A673 (cell line): ENCODE measurements at regions of chr17 and their contacts with region 1.

Region 1: DNA sequence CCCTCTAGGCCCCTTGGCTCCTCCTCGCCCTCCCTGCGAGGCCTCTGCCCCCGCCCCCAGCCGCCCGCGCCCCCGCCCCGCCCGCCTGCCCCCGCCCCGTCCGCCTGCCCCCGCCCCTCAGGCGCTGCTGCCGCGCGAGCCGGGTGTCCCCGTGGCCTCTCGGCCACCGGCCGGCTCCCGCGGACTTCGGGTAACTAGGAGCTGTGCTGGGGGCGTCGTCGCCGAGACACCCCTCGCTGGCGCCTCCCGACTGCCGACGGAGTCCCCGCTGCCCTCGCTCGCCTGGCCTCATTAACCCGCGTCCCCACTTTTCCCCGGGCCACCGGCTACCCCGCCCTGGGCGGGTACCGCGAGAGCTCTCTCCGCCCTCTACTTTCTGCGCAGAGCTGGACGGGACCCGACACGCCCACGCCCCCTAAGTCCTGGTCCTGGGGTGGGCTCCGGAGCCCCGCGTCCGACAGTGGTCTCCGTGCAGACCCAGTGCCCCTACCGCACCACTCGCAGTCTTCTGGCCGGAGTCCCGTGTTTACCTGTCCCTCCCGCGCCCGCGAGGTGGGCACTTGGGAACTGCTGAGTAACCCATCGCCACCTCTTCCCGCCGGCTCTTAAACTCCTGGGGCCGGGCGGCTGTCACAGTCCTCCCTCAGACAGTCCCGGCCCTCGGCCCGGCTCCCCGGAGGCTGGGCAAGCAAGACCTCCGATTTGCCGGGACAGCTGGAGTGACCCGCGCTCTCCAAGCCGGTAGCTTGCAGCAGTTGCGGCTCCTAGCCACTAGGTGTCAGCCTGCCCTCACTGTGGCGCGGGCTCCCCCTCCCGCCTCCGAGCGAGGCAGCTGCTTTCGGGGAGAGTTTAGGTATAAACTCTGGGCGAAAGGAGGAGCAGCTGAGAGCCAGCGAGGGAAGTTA is at the start of gene TLCD1:
- DNase-seq: peak; percentile 97
- H3K4me3 ChIP-seq: peak within 1 kb of the TSS; percentile 59
- H3K27ac ChIP-seq: peak within 1 kb of the TSS; percentile 79
- H3K4me1 ChIP-seq: peaks cover 46% of the 10 kb centered on the region
- H3K27me3 ChIP-seq: no peaks in the 10 kb centered on the region
- CTCF ChIP-seq: peak; percentile 99
- total RNA-seq, gene TLCD1: 3.8 and 7.8 TPM in 2 replicates

Region 2: DNA sequence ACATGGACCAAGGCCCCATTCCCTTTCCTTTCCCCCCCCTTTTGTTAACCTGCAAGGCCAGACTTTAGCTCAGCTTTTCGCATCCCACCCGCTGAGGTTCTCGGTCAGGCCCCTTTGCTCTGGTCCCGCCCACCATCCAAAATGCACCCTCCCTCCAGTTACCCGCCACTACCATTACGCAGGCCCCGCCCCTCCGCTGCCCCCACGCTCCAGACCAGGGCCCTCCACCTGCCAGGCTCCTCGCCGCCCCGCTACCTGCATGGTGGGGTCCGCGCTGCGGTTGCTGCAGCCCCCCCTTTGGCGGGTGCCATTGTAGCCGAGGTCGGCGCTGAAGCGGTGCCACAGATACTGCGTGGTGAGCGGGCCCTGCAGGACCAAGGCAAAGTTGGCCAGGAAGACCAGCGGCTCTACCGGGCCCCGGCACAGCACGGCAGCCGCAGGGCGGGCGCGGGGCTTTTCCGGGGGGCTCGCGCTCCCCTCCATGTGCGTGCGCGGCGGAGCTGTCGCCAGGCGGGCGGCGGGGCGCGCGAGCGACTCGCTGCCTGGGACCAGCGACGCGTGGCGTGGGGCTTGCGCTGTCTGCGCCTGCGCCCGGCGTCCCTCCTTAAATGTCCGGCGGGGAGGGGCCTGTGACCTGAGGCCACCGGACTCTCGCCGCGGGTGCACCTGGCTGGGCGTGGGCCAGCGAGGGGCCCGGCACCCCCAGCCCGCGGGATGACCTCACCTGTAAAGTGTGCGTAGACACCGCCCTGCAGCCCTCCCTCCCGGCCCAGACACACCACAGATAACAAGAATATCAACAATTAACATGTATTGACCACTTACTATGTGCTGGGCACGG is 320.6 kb before region 1 on chr17 and contains the start of gene SLC46A1:
- CTCF ChIA-PET with region 1: no interaction called
- POLR2A ChIA-PET with region 1: no interaction called
- intact Hi-C with region 1: no loop called
- DNase-seq: peak; percentile 62
- H3K4me3 ChIP-seq: peak within 1 kb of the TSS; percentile 64
- H3K27ac ChIP-seq: peak within 1 kb of the TSS; percentile 66
- H3K4me1 ChIP-seq: peaks cover 7% of the 10 kb centered on the region
- H3K27me3 ChIP-seq: no peaks in the 10 kb centered on the region
- CTCF ChIP-seq: no peak
- total RNA-seq, gene SLC46A1: 4.4 and 6.4 TPM in 2 replicates

Region 3: GRCh38 chr17:28743225-28744103 is 17.0 kb after region 1 on chr17 and contains the start of gene TRAF4:
- CTCF ChIA-PET with region 1: interaction called, 17 read pairs
- POLR2A ChIA-PET with region 1: interaction called, 4 read pairs
- intact Hi-C with region 1: loop called (anchors 2 kb)
- DNase-seq: peak; percentile 93
- H3K4me3 ChIP-seq: peak within 1 kb of the TSS; percentile 72
- H3K27ac ChIP-seq: peak within 1 kb of the TSS; percentile 94
- H3K4me1 ChIP-seq: peaks cover 32% of the 10 kb centered on the region
- H3K27me3 ChIP-seq: no peaks in the 10 kb centered on the region
- CTCF ChIP-seq: no peak
- total RNA-seq, gene TRAF4: 128 TPM in 2 replicates

Region 4: DNA sequence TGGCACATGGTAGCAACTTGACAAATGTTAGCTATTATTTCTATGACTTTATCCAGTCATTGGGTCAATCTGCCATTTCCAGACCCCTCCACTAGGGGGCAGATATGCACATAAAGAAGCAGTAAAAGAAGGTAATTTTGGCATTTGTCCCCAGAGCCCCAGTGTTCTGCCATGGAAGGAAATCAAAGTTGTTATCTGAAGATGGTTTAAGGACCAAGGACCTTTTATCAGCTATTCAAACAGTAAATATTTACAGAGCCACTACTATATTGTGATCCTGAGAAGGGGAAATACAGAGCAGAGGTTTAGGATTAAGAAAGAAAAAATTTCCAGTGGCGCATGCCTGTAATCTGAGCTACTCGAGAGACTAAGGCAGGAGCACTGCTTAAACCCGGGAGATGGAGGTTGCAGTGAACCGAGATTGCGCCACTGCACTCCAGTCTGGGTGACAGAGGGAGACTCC is 37.4 kb after region 1 on chr17:
- CTCF ChIA-PET with region 1: interaction called, 13 read pairs
- POLR2A ChIA-PET with region 1: interaction called, 3 read pairs
- intact Hi-C with region 1: loop called (anchors 1 kb)
- DNase-seq: peak; percentile 89
- H3K4me3 ChIP-seq: no peak overlapping the region
- H3K27ac ChIP-seq: no peak overlapping the region
- H3K4me1 ChIP-seq: peaks cover 29% of the 10 kb centered on the region
- H3K27me3 ChIP-seq: no peaks in the 10 kb centered on the region
- CTCF ChIP-seq: peak; percentile 96

Region 5: GRCh38 chr17:28916302-28916934 is 189.9 kb after region 1 on chr17:
- CTCF ChIA-PET with region 1: interaction called, 13 read pairs
- POLR2A ChIA-PET with region 1: interaction called, 8 read pairs
- intact Hi-C with region 1: loop called (anchors 2 kb)
- DNase-seq: peak; percentile 60
- H3K4me3 ChIP-seq: no peak overlapping the region
- H3K27ac ChIP-seq: no peak overlapping the region
- H3K4me1 ChIP-seq: no peaks in the 10 kb centered on the region
- H3K27me3 ChIP-seq: no peaks in the 10 kb centered on the region
- CTCF ChIP-seq: peak; percentile 73

Region 6: DNA sequence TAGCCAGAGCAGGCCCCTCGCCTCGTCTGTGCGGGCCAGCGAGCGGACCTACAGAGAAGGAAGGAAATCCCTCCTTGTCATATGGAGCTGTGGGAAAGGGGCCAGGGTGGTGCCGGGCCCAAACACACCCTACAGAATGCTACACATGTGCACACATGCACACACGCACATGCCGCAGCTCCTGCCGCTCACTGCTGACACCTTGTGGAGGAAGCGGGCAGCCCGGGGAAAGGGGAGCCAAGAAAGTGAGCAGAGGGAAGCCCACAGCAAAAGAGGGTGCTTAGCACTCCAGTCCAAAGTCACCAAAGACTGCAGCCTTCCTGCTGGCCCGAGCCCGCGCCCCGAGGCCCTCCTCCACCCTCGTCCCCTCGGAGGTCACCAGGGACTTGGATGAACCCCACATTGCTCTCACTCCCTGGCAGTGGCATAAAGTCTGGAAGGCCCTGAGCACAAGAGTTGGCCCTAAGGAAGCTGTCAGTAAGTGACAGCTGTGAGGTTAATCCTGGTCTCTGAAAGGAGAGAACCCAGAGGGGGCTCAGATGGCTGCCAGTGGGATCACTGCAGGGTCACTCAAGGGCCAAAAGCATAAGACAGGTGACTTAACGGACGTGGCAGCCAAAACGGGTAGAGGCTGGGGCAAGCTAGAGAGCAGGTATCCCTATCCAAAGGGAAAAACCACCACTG is 385.5 kb after region 1 on chr17:
- CTCF ChIA-PET with region 1: interaction called, 34 read pairs
- POLR2A ChIA-PET with region 1: no interaction called
- intact Hi-C with region 1: loop called (anchors 2 kb)
- DNase-seq: peak; percentile 92
- H3K4me3 ChIP-seq: no peak overlapping the region
- H3K27ac ChIP-seq: peak overlapping the region; percentile 32
- H3K4me1 ChIP-seq: peaks cover 35% of the 10 kb centered on the region
- H3K27me3 ChIP-seq: no peaks in the 10 kb centered on the region
- CTCF ChIP-seq: peak; percentile 99